ENCODE measurements at regions of chr11 and their contacts with region 1.

Region 1: GRCh38 chr11:10742471-10743208 is 8.4 kb upstream of the CTR9 start:
- DNase-seq: peak in 1 of 2 donors; percentile 73
- ATAC-seq: peak; percentile 87 to 98 (median 92)
- H3K4me3 ChIP-seq: no peak overlapping the region
- H3K4me3 Mint-ChIP-seq: peak overlapping the region; percentile 75
- H3K27ac ChIP-seq: peak overlapping the region; percentile 29
- H3K27ac Mint-ChIP-seq: peak overlapping the region; percentile 76 to 79
- H3K4me1 ChIP-seq: peaks cover 25% of the 10 kb centered on the region
- H3K4me1 Mint-ChIP-seq: peaks cover 29 to 30% of the 10 kb centered on the region in 2 donors
- H3K27me3 ChIP-seq: no peaks in the 10 kb centered on the region
- H3K27me3 Mint-ChIP-seq: peaks cover 4 to 5% of the 10 kb centered on the region in 2 donors
- CTCF ChIP-seq: no peak

Region 2: GRCh38 chr11:10441652-10442503 is 300.8 kb before region 1 on chr11:
- intact Hi-C with region 1: loop called (anchors 5 kb)
- DNase-seq: peak in 1 of 2 donors; percentile 48
- ATAC-seq: peak; percentile 73 to 90 (median 82)
- H3K4me3 ChIP-seq: no peak overlapping the region
- H3K4me3 Mint-ChIP-seq: peak overlapping the region; percentile 61
- H3K27ac ChIP-seq: peak overlapping the region; percentile 71
- H3K27ac Mint-ChIP-seq: peak overlapping the region; percentile 75 to 81
- H3K4me1 ChIP-seq: peaks cover 16% of the 10 kb centered on the region
- H3K4me1 Mint-ChIP-seq: peaks cover 20% of the 10 kb centered on the region in 2 donors
- H3K27me3 ChIP-seq: peaks cover 5% of the 10 kb centered on the region
- H3K27me3 Mint-ChIP-seq: peaks cover 34 to 50% of the 10 kb centered on the region in 2 donors
- CTCF ChIP-seq: no peak

Region 3: GRCh38 chr11:10770626-10771254 is 28.1 kb after region 1 on chr11:
- intact Hi-C with region 1: no loop called
- DNase-seq: peak in 1 of 2 donors; percentile 51
- ATAC-seq: peak in 1 of 3 donors; percentile 33
- H3K4me3 ChIP-seq: no peak overlapping the region
- H3K4me3 Mint-ChIP-seq: no peak overlapping the region
- H3K27ac ChIP-seq: no peak overlapping the region
- H3K27ac Mint-ChIP-seq: no peak overlapping the region
- H3K4me1 ChIP-seq: no peaks in the 10 kb centered on the region
- H3K4me1 Mint-ChIP-seq: no peaks in the 10 kb centered on the region
- H3K27me3 ChIP-seq: no peaks in the 10 kb centered on the region
- H3K27me3 Mint-ChIP-seq: no peaks in the 10 kb centered on the region
- CTCF ChIP-seq: peak; percentile 49

Region 4: GRCh38 chr11:10857709-10858438 is 115.2 kb after region 1 on chr11 and contains the start of gene ZBED5:
- intact Hi-C with region 1: loop called (anchors 2 kb)
- DNase-seq: peak; percentile 97 to 98
- ATAC-seq: peak; percentile 89 to 95 (median 89)
- H3K4me3 ChIP-seq: peak within 1 kb of the TSS; percentile 75
- H3K4me3 Mint-ChIP-seq: peak within 1 kb of the TSS; percentile 99
- H3K27ac ChIP-seq: peak within 1 kb of the TSS; percentile 94
- H3K27ac Mint-ChIP-seq: peak within 1 kb of the TSS; percentile 98 to 100
- H3K4me1 ChIP-seq: peaks cover 13% of the 10 kb centered on the region
- H3K4me1 Mint-ChIP-seq: peaks cover 37 to 47% of the 10 kb centered on the region in 2 donors
- H3K27me3 ChIP-seq: no peaks in the 10 kb centered on the region
- H3K27me3 Mint-ChIP-seq: no peaks in the 10 kb centered on the region
- CTCF ChIP-seq: no peak
- total RNA-seq, gene ZBED5: 40.0 to 61.3 (median 53.9) TPM